ENCODE measurements at regions of chr9 and their contacts with region 1.

Region 1: DNA sequence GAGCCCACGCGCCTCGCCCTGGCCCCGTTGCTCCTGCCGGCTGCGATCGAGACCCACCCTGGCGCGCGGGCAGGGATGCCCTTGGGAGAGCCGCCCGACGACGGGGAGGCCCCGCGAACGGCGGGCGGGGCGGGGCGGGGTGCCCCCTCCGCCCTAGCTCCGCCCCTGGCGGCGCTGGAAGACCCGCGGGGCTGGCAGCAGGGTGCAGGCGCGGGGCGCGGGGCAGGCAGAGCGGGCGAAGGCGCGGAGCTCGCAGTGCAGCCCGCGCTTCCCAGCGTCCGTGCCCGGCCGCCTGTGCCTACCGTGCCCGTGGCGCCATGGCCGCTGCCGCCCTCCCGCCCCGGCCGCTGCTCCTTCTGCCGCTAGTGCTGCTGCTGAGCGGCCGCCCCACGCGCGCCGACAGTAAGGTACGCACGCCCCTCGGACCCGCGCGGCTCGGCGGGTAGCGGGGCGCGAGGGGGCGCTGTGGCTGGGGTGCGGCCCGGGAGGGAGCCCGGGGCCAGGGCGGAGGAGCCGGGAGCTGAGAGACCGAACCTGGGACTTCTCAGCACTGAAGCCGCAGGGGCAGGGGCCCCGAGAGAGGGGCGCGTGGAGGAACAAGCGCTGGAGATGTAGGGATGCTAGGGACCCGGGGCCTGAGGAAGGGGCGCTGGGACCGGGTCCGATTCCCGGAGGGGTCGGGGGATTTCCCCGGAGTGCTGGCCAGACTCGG is at the start of gene OLFML2A:
- DNase-seq: peak; percentile 66
- H3K4me3 ChIP-seq: peak within 1 kb of the TSS; percentile 55
- H3K27ac ChIP-seq: no peak within 1 kb of the TSS
- H3K4me1 ChIP-seq: peaks cover 17% of the 10 kb centered on the region
- H3K27me3 ChIP-seq: no peaks in the 10 kb centered on the region
- CTCF ChIP-seq: peak; percentile 46; the same call in 1 of the 2 replicates
- total RNA-seq, gene OLFML2A: 1.4 and 2.9 TPM in 2 replicates

Region 2: DNA sequence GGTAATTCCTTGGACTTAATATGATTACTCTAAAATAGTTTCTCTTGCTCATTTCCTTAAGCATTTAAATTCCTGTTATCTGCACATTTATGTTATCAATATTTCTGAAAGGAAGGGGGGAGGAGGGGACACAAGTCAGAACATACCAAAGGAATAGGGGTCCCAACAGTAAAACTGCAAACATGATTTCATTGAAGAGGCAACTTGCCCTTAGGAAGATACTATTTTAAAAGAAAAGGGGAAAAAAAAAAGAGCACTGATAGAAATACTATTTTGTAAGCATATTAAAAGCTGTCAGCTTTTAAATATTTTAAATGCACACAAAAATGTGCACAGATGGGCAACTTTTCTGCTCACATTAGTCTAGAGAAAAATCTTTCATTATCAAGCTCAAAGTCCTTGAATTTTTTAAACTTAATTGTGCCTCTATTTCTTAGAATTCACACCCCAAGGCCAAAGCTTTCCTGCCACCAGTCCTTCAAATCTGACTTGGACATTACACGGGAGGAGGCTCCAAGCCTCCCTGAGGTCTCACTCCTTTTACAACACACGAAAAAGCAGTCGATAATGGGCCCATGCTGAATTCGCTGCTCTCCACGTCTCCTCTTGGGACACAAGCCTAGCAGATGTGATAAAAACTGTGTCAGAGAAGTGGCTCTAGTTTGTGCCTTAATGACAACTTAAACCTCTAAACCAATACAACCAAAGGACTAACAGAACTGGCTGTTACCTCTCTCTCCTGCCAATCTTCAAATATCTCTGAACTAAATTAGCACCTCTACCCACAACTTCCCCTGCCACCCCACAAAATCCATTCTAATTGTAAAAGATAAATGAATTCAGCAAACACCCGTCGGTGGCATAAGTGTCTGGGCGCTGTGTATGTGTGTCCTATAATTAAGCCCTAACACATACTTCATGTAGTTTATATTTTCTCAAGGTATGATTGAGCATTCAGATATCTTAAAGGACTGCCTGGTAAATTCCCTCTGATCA is 1001.5 kb before region 1 on chr9:
- CTCF ChIA-PET with region 1: no interaction called
- POLR2A ChIA-PET with region 1: no interaction called
- intact Hi-C with region 1: no loop called
- DNase-seq: no peak
- H3K4me3 ChIP-seq: no peak overlapping the region
- H3K27ac ChIP-seq: no peak overlapping the region
- H3K4me1 ChIP-seq: peaks cover 18% of the 10 kb centered on the region
- H3K27me3 ChIP-seq: no peaks in the 10 kb centered on the region
- CTCF ChIP-seq: no peak

Region 3: DNA sequence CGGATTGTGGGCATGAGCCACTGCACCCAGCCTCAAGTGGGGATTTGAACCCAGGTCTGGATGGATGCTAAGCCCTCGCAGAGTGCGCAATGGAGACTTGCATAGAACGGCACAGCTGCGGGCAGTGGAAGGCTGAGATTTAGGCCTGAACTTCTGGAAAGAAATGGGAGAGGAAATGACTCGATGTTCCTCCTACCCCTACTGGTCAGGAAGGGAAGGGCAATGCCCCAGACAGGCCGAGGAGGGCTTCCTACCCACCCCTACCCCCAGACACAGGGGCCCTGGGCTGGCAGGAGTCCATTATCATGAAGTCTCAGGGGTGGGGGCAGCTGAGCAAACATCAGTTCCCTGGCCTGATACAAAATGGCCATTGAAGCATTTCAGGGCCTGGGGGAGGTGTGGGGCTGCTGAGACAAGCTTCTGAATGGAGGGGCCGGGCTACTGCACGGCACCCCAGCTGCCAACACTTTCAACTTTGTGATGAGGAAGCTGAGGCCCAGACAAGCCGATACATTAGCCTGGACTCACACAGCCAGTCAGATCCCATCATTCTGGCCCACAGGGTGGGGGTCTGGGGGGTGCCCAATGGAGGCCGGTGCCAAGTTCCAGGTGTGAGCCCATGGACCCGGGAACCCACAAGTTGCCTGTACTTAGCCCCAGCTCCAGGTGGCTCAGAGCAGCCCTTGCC is 62.6 kb after region 1 on chr9:
- CTCF ChIA-PET with region 1: interaction called, 3 read pairs
- POLR2A ChIA-PET with region 1: no interaction called
- intact Hi-C with region 1: loop called (anchors 5 kb)
- DNase-seq: no peak
- H3K4me3 ChIP-seq: no peak overlapping the region
- H3K27ac ChIP-seq: no peak overlapping the region
- H3K4me1 ChIP-seq: peaks cover 10% of the 10 kb centered on the region
- H3K27me3 ChIP-seq: no peaks in the 10 kb centered on the region
- CTCF ChIP-seq: peak; percentile 45; the same call in 1 of the 2 replicates

Measured in A673 (cell line).